CD8-positive, alpha-beta T cell (primary cell): ENCODE measurements at regions of chr13 and their contacts with region 1.

Region 1: GRCh38 chr13:97212601-97213040 is 9.5 kb upstream of the MBNL2 start:
- DNase-seq: no peak
- ATAC-seq: no peak
- H3K4me3 ChIP-seq: no peak overlapping the region
- H3K4me3 Mint-ChIP-seq: no peak overlapping the region
- H3K27ac ChIP-seq: no peak overlapping the region
- H3K27ac Mint-ChIP-seq: no peak overlapping the region
- H3K4me1 ChIP-seq: peaks cover 37% of the 10 kb centered on the region
- H3K4me1 Mint-ChIP-seq: peaks cover 52% of the 10 kb centered on the region
- H3K27me3 ChIP-seq: no peaks in the 10 kb centered on the region
- H3K27me3 Mint-ChIP-seq: no peaks in the 10 kb centered on the region
- CTCF ChIP-seq: no peak

Region 2: GRCh38 chr13:96880419-96880818 is 332.2 kb before region 1 on chr13:
- CTCF ChIA-PET with region 1: no interaction called
- POLR2A ChIA-PET with region 1: no interaction called
- intact Hi-C with region 1: no loop called
- DNase-seq: no peak
- ATAC-seq: no peak
- H3K4me3 ChIP-seq: no peak overlapping the region
- H3K4me3 Mint-ChIP-seq: no peak overlapping the region
- H3K27ac ChIP-seq: no peak overlapping the region
- H3K27ac Mint-ChIP-seq: no peak overlapping the region
- H3K4me1 ChIP-seq: no peaks in the 10 kb centered on the region
- H3K4me1 Mint-ChIP-seq: no peaks in the 10 kb centered on the region
- H3K27me3 ChIP-seq: no peaks in the 10 kb centered on the region
- H3K27me3 Mint-ChIP-seq: no peaks in the 10 kb centered on the region
- CTCF ChIP-seq: no peak

Region 3: DNA sequence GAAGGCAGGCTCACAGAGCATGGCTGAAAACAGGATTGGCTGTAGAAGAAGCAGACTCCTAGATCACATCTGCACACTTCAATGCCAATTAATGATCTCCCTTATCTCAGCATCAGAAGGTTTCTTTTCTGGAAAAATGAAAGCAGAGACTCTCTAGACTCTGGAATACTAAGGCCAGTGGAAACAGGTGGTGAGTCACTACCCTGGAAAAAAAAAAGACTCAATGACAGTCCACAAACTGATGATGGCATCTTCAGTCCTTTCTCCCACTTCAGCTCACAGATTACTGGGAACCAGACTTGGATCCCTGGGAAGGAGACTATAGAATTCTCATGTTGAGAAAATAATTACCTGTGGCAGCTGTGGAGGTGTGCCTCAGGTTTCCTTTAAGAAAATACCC is 38.0 kb before region 1 on chr13:
- CTCF ChIA-PET with region 1: no interaction called
- POLR2A ChIA-PET with region 1: no interaction called
- intact Hi-C with region 1: loop called in 1 of 2 experiments (anchors 1 kb)
- DNase-seq: no peak
- ATAC-seq: no peak
- H3K4me3 ChIP-seq: no peak overlapping the region
- H3K4me3 Mint-ChIP-seq: no peak overlapping the region
- H3K27ac ChIP-seq: no peak overlapping the region
- H3K27ac Mint-ChIP-seq: no peak overlapping the region
- H3K4me1 ChIP-seq: no peaks in the 10 kb centered on the region
- H3K4me1 Mint-ChIP-seq: no peaks in the 10 kb centered on the region
- H3K27me3 ChIP-seq: no peaks in the 10 kb centered on the region
- H3K27me3 Mint-ChIP-seq: peaks cover 11% of the 10 kb centered on the region
- CTCF ChIP-seq: no peak

Region 4: GRCh38 chr13:97460004-97460775 is 247.6 kb after region 1 on chr13:
- CTCF ChIA-PET with region 1: no interaction called
- POLR2A ChIA-PET with region 1: no interaction called
- intact Hi-C with region 1: no loop called
- DNase-seq: no peak
- ATAC-seq: peak; percentile 42
- H3K4me3 ChIP-seq: no peak overlapping the region
- H3K4me3 Mint-ChIP-seq: peak overlapping the region; percentile 63
- H3K27ac ChIP-seq: no peak overlapping the region
- H3K27ac Mint-ChIP-seq: peak overlapping the region; percentile 86
- H3K4me1 ChIP-seq: peaks cover 15% of the 10 kb centered on the region
- H3K4me1 Mint-ChIP-seq: peaks cover 38% of the 10 kb centered on the region
- H3K27me3 ChIP-seq: no peaks in the 10 kb centered on the region
- H3K27me3 Mint-ChIP-seq: no peaks in the 10 kb centered on the region
- CTCF ChIP-seq: no peak